ENCODE measurements at regions of chr5 and their contacts with region 1.

Region 1: GRCh38 chr5:76544268-76544926 is 78.8 kb downstream of the F2RL2 start:
- DNase-seq: no peak
- H3K4me3 ChIP-seq: no peak overlapping the region
- H3K27ac ChIP-seq: peak overlapping the region; percentile 23 to 57 (median 52)
- H3K4me1 ChIP-seq: peaks cover 0 to 48% (median 12%) of the 10 kb centered on the region in 3 donors
- H3K27me3 ChIP-seq: no peaks in the 10 kb centered on the region
- CTCF ChIP-seq: peak in 5 of 6 experiments; percentile 12 to 64 (median 56)
- POLR2A ChIP-seq: no peak

Region 2: GRCh38 chr5:76402886-76403765 is 141.3 kb before region 1 on chr5 and contains the start of gene IQGAP2:
- intact Hi-C with region 1: loop called (anchors 10 kb)
- DNase-seq: peak; percentile 54
- H3K4me3 ChIP-seq: peak within 1 kb of the TSS; percentile 43 to 74 (median 52)
- H3K27ac ChIP-seq: peak within 1 kb of the TSS; percentile 67 to 79 (median 69)
- H3K4me1 ChIP-seq: peaks cover 0 to 34% (median 13%) of the 10 kb centered on the region in 3 donors
- H3K27me3 ChIP-seq: peaks cover 0 to 40% (median 5%) of the 10 kb centered on the region in 4 donors
- CTCF ChIP-seq: peak; percentile 45 to 73 (median 64)
- POLR2A ChIP-seq: peak in 1 of 4 donors; percentile 43
- total RNA-seq, gene IQGAP2: 3.0 to 16.6 (median 5.9) TPM

Region 3: GRCh38 chr5:76483433-76483832 is 61.0 kb before region 1 on chr5:
- intact Hi-C with region 1: no loop called
- DNase-seq: no peak
- H3K4me3 ChIP-seq: no peak overlapping the region
- H3K27ac ChIP-seq: no peak overlapping the region
- H3K4me1 ChIP-seq: peaks cover 0 to 10% (median 0%) of the 10 kb centered on the region in 3 donors
- H3K27me3 ChIP-seq: no peaks in the 10 kb centered on the region
- CTCF ChIP-seq: no peak
- POLR2A ChIP-seq: no peak